IMR-90 (cell line): ENCODE measurements at regions of chr16 and their contacts with region 1.

Region 1: GRCh38 chr16:29825145-29826044 is 5.1 kb downstream of the MVP start:
- DNase-seq: peak; percentile 90
- ATAC-seq: peak; percentile 64
- H3K4me3 ChIP-seq: no peak overlapping the region; the same call in 1 of the 2 replicates
- H3K27ac ChIP-seq: peak overlapping the region; percentile 95
- H3K4me1 ChIP-seq: peaks cover 35% of the 10 kb centered on the region
- H3K27me3 ChIP-seq: no peaks in the 10 kb centered on the region
- CTCF ChIP-seq: no peak
- POLR2A ChIP-seq: no peak
- RAD21 ChIP-seq: no peak

Region 2: DNA sequence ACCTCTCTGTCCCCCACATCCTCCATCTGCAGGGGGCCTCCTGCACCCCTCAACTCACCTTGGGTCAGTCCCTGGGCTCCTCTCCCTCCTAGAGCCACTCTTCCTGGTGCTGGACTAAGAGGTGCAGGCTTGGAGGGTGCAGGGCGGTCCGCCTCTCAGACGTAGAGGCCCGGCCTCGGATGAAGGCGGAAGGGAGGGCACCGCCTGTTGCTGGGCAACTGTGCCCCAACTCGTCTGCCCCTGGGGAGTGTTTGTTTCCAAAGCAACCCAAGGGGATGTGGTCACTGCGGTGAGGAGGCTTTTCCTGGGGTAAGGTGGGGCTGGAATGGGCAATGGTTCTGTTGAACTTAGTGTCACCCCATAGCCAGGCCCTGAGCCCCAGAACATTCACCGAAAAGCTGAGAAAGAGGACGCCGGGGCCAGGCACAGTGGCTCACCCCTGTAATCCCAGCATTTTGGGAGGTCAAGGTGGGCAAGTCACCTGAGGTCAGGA is 79.5 kb before region 1 on chr16 and contains the start of gene C16orf54:
- CTCF ChIA-PET with region 1: no interaction called
- POLR2A ChIA-PET with region 1: no interaction called
- dilution Hi-C with region 1: no loop called
- in situ Hi-C with region 1: no loop called
- intact Hi-C with region 1: no loop called
- DNase-seq: no peak
- ATAC-seq: no peak
- H3K4me3 ChIP-seq: no peak within 1 kb of the TSS
- H3K27ac ChIP-seq: no peak within 1 kb of the TSS
- H3K4me1 ChIP-seq: no peaks in the 10 kb centered on the region
- H3K27me3 ChIP-seq: peaks cover 21% of the 10 kb centered on the region
- CTCF ChIP-seq: no peak
- POLR2A ChIP-seq: no peak
- RAD21 ChIP-seq: no peak
- total RNA-seq, gene C16orf54: not detected in 2 replicates

Region 3: GRCh38 chr16:29848420-29849297 is 23.3 kb after region 1 on chr16:
- CTCF ChIA-PET with region 1: interaction called, 10 read pairs
- POLR2A ChIA-PET with region 1: no interaction called
- dilution Hi-C with region 1: no loop called
- in situ Hi-C with region 1: no loop called
- intact Hi-C with region 1: no loop called
- DNase-seq: peak; percentile 63
- ATAC-seq: peak; percentile 84
- H3K4me3 ChIP-seq: no peak overlapping the region
- H3K27ac ChIP-seq: no peak overlapping the region
- H3K4me1 ChIP-seq: no peaks in the 10 kb centered on the region; the same call in 1 of the 2 replicates
- H3K27me3 ChIP-seq: no peaks in the 10 kb centered on the region
- CTCF ChIP-seq: peak; percentile 74
- POLR2A ChIP-seq: no peak
- RAD21 ChIP-seq: peak; percentile 76

Region 4: DNA sequence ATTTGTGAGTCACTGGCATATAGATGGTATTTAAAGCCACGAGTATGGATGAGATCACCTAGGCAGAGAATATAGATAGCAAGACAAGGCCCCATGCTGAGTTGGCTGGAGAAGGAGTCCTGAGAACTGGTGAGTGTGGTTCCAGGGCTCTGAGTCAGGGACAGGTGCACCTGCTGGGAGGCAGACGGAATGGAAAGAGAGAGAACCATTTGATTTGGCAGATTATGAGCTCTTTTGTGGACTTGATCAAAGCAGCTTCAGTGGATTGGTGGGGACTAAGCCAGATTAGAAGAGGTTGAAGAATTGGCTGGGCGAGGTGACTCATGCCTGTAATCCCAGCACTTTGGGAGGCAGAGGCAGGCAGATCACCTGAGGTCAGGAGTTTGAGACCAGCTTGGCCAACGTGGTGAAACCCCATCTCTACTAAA is 193.3 kb after region 1 on chr16:
- CTCF ChIA-PET with region 1: no interaction called
- POLR2A ChIA-PET with region 1: interaction called, 10 read pairs
- dilution Hi-C with region 1: no loop called
- in situ Hi-C with region 1: no loop called
- intact Hi-C with region 1: no loop called
- DNase-seq: peak; percentile 40
- ATAC-seq: no peak
- H3K4me3 ChIP-seq: no peak overlapping the region
- H3K27ac ChIP-seq: no peak overlapping the region
- H3K4me1 ChIP-seq: no peaks in the 10 kb centered on the region
- H3K27me3 ChIP-seq: peaks cover 7% of the 10 kb centered on the region
- CTCF ChIP-seq: no peak
- POLR2A ChIP-seq: no peak
- RAD21 ChIP-seq: no peak